Activated T-helper 1 cell treated with anti-CD3 and anti-CD28 coated beads, Interleukin-12 subunit alpha, Interleukin-12 subunit beta, Interleukin-2, Interleukin-4 antibody, amounts not matched to agents 30 ng/mL and 10 ng/mL and 1 ng/mL, durations not matched to agents 14 hours and 24 hours and 36 hours (primary cell): ENCODE measurements at regions of chr18 and their contacts with region 1.

Region 1: GRCh38 chr18:79988451-79989194 is at the start of gene TXNL4A:
- DNase-seq: peak; percentile 85
- H3K4me3 Mint-ChIP-seq: peak within 1 kb of the TSS; percentile 96
- H3K27ac Mint-ChIP-seq: peak within 1 kb of the TSS; percentile 97
- H3K4me1 Mint-ChIP-seq: peaks cover 32% of the 10 kb centered on the region
- H3K27me3 Mint-ChIP-seq: peaks cover 5% of the 10 kb centered on the region
- total RNA-seq, gene TXNL4A: 190 and 198 TPM in 2 replicates

Region 2: GRCh38 chr18:79405781-79406575 is 582.6 kb before region 1 on chr18:
- intact Hi-C with region 1: loop called (anchors 5 kb)
- DNase-seq: peak; percentile 84
- H3K4me3 Mint-ChIP-seq: peak overlapping the region; percentile 84
- H3K27ac Mint-ChIP-seq: peak overlapping the region; percentile 97
- H3K4me1 Mint-ChIP-seq: peaks cover 57% of the 10 kb centered on the region
- H3K27me3 Mint-ChIP-seq: no peaks in the 10 kb centered on the region

Region 3: GRCh38 chr18:79749251-79750191 is 239.1 kb before region 1 on chr18:
- intact Hi-C with region 1: no loop called
- DNase-seq: no peak
- H3K4me3 Mint-ChIP-seq: no peak overlapping the region
- H3K27ac Mint-ChIP-seq: no peak overlapping the region
- H3K4me1 Mint-ChIP-seq: no peaks in the 10 kb centered on the region
- H3K27me3 Mint-ChIP-seq: no peaks in the 10 kb centered on the region

Region 4: DNA sequence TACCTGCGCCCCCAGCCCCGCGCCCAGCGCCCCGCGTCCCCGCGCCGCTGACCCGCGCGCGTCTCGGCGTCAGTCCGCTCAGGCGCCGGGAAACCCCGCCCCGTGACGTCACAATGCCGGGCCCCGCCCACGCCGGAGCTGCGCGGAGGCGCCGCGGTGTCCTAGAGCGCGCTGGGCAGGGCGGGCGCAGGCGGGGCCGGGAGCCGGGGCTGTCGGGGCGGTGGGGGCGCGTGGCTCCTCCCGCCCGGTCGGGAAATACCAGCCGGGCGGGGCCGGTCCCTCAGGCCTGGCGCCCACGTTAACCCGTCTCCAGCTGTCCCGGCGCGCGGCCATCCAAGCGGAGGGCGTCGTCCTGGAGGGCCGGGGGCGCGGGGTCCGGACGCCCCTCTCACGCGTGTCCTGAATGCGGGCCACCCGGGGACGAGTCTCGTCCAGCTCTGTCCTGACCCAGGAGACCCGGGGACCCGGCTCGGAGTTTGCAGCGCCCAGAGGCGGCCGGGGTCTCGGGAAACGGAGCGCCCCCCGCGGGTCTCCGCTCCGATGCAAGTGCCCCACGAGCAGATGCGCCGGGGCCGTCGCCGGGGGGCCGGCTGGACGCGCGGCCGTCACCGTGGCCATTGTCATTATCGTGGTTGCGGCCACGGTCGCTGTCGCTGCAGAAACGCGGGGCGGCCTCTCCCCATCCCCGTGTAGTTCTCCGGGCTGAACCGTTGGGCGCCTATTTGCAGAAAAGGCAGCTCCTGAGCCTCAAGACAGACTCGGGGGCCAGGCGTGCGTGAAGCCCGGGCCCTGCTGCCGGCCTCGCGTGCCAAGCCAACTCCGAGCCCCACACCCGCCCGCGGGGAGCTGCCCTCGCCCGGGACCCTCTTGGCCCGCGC is 36.8 kb before region 1 on chr18 and contains the start of gene SLC66A2:
- intact Hi-C with region 1: loop called (anchors 1 kb)
- DNase-seq: peak; percentile 89
- H3K4me3 Mint-ChIP-seq: peak within 1 kb of the TSS; percentile 89
- H3K27ac Mint-ChIP-seq: peak within 1 kb of the TSS; percentile 82
- H3K4me1 Mint-ChIP-seq: peaks cover 37% of the 10 kb centered on the region
- H3K27me3 Mint-ChIP-seq: no peaks in the 10 kb centered on the region
- total RNA-seq, gene SLC66A2: 49.2 and 54.6 TPM in 2 replicates

Region 5: DNA sequence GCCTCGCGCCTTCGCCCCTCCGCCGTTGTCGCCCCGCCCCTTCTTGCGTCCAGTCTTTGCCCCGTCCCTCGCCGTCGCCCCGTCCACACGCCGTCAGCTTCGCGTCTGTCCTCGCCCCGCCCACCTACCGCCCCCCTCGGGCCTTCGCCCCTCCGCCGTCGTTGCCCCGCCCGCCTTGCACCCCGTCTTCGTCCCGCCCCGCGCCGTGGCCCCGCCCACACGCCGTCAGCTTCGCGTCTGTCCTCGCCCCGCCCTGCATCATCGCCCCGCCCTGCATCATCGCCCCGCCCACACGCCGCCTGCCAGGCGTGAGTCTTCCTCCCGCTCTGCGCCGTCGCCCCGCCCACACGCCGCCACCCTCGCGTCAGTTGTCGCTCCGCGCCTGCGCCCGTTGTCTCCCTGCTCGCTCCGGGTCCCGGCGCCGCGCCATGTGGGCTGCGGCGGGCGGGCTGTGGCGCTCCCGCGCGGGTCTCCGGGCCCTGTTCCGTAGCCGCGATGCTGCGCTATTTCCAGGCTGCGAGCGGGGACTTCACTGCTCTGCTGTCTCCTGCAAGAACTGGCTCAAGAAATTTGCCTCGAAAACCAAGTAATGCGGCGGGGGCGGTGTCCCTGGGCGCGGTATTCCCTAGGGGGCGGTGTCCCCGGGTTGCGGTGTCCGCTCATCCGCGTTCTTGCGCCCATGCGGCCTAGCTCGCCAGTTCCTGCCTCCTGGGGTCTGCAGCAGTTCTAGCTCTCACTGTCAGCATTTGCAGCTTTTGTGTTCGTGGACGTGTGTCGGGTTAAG is 45.6 kb after region 1 on chr18 and contains the start of gene RBFA:
- intact Hi-C with region 1: loop called (anchors 1 kb)
- DNase-seq: peak; percentile 98
- H3K4me3 Mint-ChIP-seq: peak within 1 kb of the TSS; percentile 87
- H3K27ac Mint-ChIP-seq: peak within 1 kb of the TSS; percentile 88
- H3K4me1 Mint-ChIP-seq: peaks cover 25% of the 10 kb centered on the region
- H3K27me3 Mint-ChIP-seq: peaks cover 4% of the 10 kb centered on the region
- total RNA-seq, gene RBFA: 48.5 and 50.3 TPM in 2 replicates

Region 6: DNA sequence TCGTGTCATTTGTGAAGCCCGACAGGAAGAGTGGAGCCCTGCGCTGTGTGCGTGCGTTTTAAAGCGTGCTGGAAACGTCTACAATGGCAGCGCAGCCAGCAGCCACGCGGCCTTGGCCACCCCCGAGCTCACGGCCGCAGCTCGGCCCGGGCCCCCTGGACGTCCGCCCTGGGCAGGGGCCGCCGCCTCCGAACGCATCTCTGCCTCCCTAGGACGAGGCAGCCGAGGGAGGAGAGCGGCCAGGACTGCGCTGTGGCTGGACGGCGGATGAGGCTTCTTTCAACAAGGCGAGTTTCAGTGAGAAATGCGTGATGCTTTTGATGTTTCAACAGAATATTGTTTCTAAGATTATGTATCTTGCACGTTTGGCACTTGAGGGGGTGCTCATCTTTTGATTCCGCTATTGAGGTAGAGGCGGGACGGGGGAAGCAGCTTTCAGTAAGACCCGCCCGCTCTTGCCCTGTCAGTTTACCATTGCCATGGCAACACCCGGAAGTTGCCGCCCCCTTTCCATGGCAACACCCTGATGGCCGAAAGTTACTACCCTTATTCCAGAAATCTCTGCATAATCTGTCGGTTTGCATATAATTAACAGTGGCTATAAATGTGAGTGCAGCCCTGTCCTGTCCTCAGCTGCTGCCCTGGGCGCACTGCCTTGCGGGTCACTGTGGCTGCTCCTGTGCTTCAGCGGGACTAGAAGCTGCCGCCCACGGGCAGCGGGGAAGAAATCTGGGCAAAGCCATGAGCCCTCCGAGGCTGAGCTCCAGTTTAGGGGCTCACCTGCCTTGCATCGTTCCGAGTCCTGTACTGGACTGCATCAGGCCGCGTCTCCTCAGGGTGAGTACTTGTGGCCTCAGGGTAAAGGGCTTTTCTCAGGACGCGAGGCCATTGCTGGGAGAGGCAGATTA is 159.0 kb after region 1 on chr18:
- intact Hi-C with region 1: loop called (anchors 2 kb)
- DNase-seq: peak; percentile 70
- H3K4me3 Mint-ChIP-seq: peak overlapping the region; percentile 86
- H3K27ac Mint-ChIP-seq: peak overlapping the region; percentile 65
- H3K4me1 Mint-ChIP-seq: peaks cover 10% of the 10 kb centered on the region
- H3K27me3 Mint-ChIP-seq: peaks cover 3% of the 10 kb centered on the region